Activated CD4-positive, alpha-beta memory T cell treated with anti-CD3 and anti-CD28 coated beads, Interleukin-2, amount 10 ng/mL, durations not matched to agents 7 days and 5 days (primary cell): ENCODE measurements at regions of chr15 and their contacts with region 1.

Region 1: GRCh38 chr15:64877435-64877834 is 34.3 kb upstream of the ANKDD1A start:
- DNase-seq: peak; percentile 49
- H3K4me3 Mint-ChIP-seq: no peak overlapping the region
- H3K27ac Mint-ChIP-seq: peak overlapping the region; percentile 85
- H3K4me1 Mint-ChIP-seq: peaks cover 59% of the 10 kb centered on the region
- H3K27me3 Mint-ChIP-seq: no peaks in the 10 kb centered on the region

Region 2: DNA sequence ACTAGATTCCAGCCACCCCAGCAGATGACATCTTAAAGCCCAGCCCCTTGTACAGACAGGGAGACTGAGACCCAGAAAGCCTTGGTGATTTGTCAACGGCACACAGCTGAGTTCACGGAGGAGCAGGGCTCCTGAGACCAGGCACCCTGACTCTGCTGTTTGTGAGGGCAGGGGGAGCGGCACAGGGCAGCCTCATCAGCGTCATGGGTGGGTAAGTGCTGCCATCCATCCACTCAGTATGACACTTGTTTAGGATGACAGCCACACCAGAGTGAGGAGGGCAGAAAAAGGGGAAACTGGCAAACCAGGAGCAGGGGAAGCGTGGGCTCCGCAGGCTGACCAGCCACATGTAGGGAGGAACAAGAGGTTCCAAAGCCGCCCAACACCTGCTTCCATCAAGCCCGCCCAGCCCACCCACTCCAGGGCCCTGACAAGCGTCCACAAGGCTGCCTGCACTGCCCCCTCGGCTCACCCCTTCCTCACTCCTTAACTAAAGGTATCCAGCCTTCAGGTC is 122.0 kb before region 1 on chr15:
- CTCF ChIA-PET with region 1: no interaction called
- POLR2A ChIA-PET with region 1: no interaction called
- DNase-seq: no peak
- H3K4me3 Mint-ChIP-seq: no peak overlapping the region
- H3K27ac Mint-ChIP-seq: no peak overlapping the region
- H3K4me1 Mint-ChIP-seq: no peaks in the 10 kb centered on the region
- H3K27me3 Mint-ChIP-seq: peaks cover 5% of the 10 kb centered on the region

Region 3: GRCh38 chr15:64800476-64800875 is 77.0 kb before region 1 on chr15:
- CTCF ChIA-PET with region 1: no interaction called
- POLR2A ChIA-PET with region 1: no interaction called
- DNase-seq: no peak
- H3K4me3 Mint-ChIP-seq: no peak overlapping the region
- H3K27ac Mint-ChIP-seq: no peak overlapping the region
- H3K4me1 Mint-ChIP-seq: no peaks in the 10 kb centered on the region
- H3K27me3 Mint-ChIP-seq: peaks cover 1% of the 10 kb centered on the region

Region 4: DNA sequence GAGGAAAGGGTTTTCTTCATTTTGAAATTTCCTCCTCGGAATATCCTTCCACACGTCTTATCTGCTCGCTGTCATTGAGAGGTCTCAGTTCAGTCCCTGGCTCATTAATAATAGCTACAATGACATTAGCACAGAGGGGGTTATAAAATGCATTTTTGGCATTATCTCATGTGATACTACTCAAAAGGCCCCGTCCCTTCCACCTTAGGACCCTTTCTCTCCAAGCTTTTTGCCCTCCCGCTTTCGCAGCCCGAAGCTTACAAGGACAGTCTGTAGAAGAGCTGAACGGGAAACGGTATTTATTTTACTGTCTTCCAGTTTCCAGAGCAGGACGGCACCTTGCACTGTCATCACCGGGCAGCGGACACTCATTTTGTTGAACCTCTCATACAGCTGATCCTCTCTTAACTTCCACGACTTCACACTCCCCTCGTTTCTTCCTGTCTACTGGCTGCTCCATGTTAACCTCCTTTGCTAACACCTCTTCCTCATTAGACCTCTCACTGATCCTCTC is 41.4 kb before region 1 on chr15:
- CTCF ChIA-PET with region 1: interaction called, 10 read pairs
- POLR2A ChIA-PET with region 1: interaction called, 4 read pairs
- DNase-seq: no peak
- H3K4me3 Mint-ChIP-seq: peak overlapping the region; percentile 35
- H3K27ac Mint-ChIP-seq: peak overlapping the region; percentile 55
- H3K4me1 Mint-ChIP-seq: peaks cover 47% of the 10 kb centered on the region
- H3K27me3 Mint-ChIP-seq: no peaks in the 10 kb centered on the region

Region 5: DNA sequence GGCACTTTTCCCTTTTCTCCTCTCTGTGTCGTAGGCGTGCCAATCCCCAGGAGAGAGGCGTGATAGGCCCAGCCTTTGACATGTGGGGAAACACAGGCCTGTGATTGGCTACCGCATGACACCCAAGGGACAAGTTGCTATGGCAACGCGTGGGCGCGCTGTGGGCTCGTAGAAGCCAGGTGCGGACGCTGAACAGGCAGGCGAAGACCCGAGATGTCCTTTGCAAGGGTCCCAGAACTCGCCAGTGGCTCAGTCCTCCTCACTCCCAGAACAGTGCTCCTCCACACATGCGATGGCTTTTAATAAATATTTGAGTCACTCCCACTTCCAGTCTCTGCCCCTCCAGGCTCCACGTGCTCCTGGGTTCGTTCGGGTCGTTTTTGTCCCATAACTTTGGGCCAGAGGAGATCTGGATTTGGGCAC is 172.0 kb after region 1 on chr15:
- CTCF ChIA-PET with region 1: no interaction called
- POLR2A ChIA-PET with region 1: no interaction called
- DNase-seq: peak; percentile 85
- H3K4me3 Mint-ChIP-seq: peak overlapping the region; percentile 54
- H3K27ac Mint-ChIP-seq: no peak overlapping the region
- H3K4me1 Mint-ChIP-seq: peaks cover 15% of the 10 kb centered on the region
- H3K27me3 Mint-ChIP-seq: no peaks in the 10 kb centered on the region